Activated CD4-positive, alpha-beta T cell treated with anti-CD3 and anti-CD28 coated beads for 36 hours (primary cell): ENCODE measurements at regions of chr22 and their contacts with region 1.

Region 1: GRCh38 chr22:37357446-37358075 is 69.7 kb downstream of the ELFN2 start:
- DNase-seq: no peak
- ATAC-seq: no peak
- H3K4me3 Mint-ChIP-seq: no peak overlapping the region
- H3K27ac Mint-ChIP-seq: no peak overlapping the region
- H3K4me1 Mint-ChIP-seq: no peaks in the 10 kb centered on the region
- H3K27me3 Mint-ChIP-seq: no peaks in the 10 kb centered on the region

Region 2: DNA sequence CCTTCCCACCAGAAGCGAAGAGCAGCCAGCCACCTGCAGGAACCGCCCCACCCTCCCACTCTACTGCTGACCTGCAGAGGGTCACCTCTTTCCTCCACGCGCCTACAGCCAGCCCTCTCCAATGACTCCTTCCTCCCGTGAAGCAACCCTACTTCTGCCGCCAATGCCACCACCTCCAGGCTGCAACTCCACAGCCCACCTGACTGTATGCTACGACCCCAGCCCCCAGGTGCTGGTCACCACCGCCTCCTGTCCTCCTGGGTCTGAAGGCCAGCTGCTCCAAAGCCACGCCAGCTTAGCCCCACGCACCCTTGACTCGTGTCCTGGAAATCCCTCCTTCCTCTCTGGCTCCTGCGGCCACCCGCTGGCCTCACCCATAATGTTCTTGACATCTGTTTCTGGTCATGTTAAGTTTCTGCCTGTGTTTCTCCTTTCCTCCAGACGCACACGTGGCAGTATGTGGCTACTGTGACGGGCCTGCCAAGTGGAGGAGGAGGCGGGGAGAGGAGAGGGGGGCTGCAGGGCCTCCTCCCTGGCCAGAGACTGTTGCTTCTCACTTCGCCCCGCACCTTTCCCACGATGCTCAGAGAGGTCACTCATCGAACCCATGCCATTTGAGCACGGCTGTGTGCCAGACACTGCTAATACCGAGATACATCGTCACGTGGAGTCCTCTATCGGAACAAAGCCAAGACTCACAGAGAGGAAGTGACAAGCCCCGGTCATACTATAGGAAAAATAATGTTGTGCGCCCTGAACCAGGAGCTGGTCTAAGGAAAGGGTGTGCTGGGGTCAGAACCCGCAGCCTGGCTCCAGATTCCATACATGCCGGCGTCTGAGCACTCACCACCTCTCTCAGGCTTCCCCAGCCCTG is 181.1 kb before region 1 on chr22:
- CTCF ChIA-PET with region 1: no interaction called
- POLR2A ChIA-PET with region 1: no interaction called
- intact Hi-C with region 1: no loop called
- DNase-seq: peak; percentile 17
- ATAC-seq: peak; percentile 78
- H3K4me3 Mint-ChIP-seq: no peak overlapping the region
- H3K27ac Mint-ChIP-seq: no peak overlapping the region
- H3K4me1 Mint-ChIP-seq: peaks cover 12% of the 10 kb centered on the region
- H3K27me3 Mint-ChIP-seq: no peaks in the 10 kb centered on the region

Region 3: GRCh38 chr22:37404091-37404490 is 46.5 kb after region 1 on chr22:
- CTCF ChIA-PET with region 1: no interaction called
- POLR2A ChIA-PET with region 1: no interaction called
- intact Hi-C with region 1: loop called in 1 of 2 experiments (anchors 2 kb)
- DNase-seq: no peak
- ATAC-seq: no peak
- H3K4me3 Mint-ChIP-seq: no peak overlapping the region
- H3K27ac Mint-ChIP-seq: no peak overlapping the region
- H3K4me1 Mint-ChIP-seq: no peaks in the 10 kb centered on the region
- H3K27me3 Mint-ChIP-seq: no peaks in the 10 kb centered on the region

Region 4: GRCh38 chr22:37498289-37498909 is 140.8 kb after region 1 on chr22:
- CTCF ChIA-PET with region 1: no interaction called
- POLR2A ChIA-PET with region 1: no interaction called
- intact Hi-C with region 1: no loop called
- DNase-seq: peak; percentile 84
- ATAC-seq: peak; percentile 98
- H3K4me3 Mint-ChIP-seq: no peak overlapping the region
- H3K27ac Mint-ChIP-seq: no peak overlapping the region
- H3K4me1 Mint-ChIP-seq: peaks cover 15% of the 10 kb centered on the region
- H3K27me3 Mint-ChIP-seq: no peaks in the 10 kb centered on the region